ENCODE measurements at regions of chr3 and their contacts with region 1.

Region 1: DNA sequence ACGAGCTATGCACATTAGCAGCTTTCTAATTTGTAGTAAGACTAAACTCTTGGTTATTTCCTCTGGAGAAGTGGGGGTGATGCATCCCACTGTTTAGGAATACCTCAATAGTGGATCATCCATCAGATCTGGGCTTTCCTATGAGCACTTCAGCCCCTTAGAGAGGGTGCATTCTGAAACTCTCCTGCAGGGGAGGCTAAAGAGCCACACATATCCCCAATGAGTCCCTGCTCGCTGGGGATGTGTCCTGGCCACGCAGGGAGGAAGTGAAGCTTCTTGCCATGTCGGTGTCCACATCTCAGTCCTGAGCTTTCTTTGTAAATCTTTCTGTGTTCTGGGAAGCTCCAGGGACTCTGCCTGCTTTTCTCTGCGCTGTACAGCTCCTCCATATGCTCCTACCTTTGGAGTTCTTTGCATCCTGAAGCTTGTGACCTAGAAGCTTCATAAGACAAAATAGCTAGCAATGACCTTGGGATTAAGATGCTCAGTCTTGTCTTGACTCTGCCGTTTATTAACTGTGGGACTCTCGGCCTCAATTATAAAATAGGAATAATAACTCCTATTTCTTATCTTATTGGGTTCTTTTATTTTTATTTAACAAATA is 28.3 kb upstream of the MASP1 start:
- DNase-seq: peak; percentile 34
- H3K4me3 ChIP-seq: no peak overlapping the region
- H3K27ac ChIP-seq: no peak overlapping the region
- H3K27me3 ChIP-seq: peaks cover 15% of the 10 kb centered on the region
- CTCF ChIP-seq: peak; percentile 93

Region 2: GRCh38 chr3:187112934-187113793 is 206.6 kb before region 1 on chr3:
- CTCF ChIA-PET with region 1: interaction called, 20 read pairs
- POLR2A ChIA-PET with region 1: no interaction called
- DNase-seq: no peak
- H3K4me3 ChIP-seq: no peak overlapping the region
- H3K27ac ChIP-seq: no peak overlapping the region
- H3K27me3 ChIP-seq: no peaks in the 10 kb centered on the region
- CTCF ChIP-seq: peak; percentile 61

Region 3: DNA sequence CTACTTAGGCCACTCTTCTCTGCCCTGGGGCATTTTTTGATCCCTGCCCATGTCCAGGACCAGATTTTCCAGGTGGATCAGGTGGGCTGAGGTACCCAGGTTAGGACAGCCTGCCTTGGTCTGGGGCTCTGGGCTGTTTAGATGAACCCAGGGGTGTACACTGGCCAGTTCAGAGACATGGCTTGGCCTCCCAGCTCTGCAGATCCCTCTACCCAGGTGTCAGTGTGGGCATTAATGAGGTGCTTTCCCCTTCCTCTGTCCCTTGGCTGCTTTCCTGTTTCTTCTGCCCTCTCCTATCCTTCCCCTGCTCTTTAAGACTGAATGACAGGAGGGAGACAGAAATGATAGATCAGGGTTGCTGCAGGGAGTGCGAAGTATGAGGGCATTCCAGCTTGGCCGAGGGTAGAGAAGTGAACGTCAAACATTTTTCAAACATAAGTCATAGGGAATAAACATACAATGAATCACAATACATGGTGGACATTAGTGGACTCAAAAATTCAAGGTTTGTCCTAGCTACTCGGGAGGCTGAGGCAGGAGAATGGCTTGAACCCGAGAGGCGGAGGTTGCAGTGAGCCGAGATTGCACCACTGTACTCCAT is 92.0 kb before region 1 on chr3:
- CTCF ChIA-PET with region 1: interaction called, 241 read pairs
- POLR2A ChIA-PET with region 1: interaction called, 3 read pairs
- DNase-seq: peak; percentile 43
- H3K4me3 ChIP-seq: no peak overlapping the region
- H3K27ac ChIP-seq: no peak overlapping the region
- H3K27me3 ChIP-seq: no peaks in the 10 kb centered on the region
- CTCF ChIP-seq: no peak

Region 4: GRCh38 chr3:187291001-187291511 is 28.7 kb before region 1 on chr3:
- CTCF ChIA-PET with region 1: interaction called, 54 read pairs
- POLR2A ChIA-PET with region 1: no interaction called
- DNase-seq: peak; percentile 24
- H3K4me3 ChIP-seq: peak overlapping the region; percentile 73
- H3K27ac ChIP-seq: peak overlapping the region; percentile 47
- H3K27me3 ChIP-seq: no peaks in the 10 kb centered on the region
- CTCF ChIP-seq: no peak

Region 5: GRCh38 chr3:187360596-187360995 is 40.8 kb after region 1 on chr3:
- CTCF ChIA-PET with region 1: interaction called, 11 read pairs
- POLR2A ChIA-PET with region 1: no interaction called
- DNase-seq: no peak
- H3K4me3 ChIP-seq: no peak overlapping the region
- H3K27ac ChIP-seq: no peak overlapping the region
- H3K27me3 ChIP-seq: peaks cover 17% of the 10 kb centered on the region
- CTCF ChIP-seq: no peak

Region 6: GRCh38 chr3:187616307-187616972 is 296.6 kb after region 1 on chr3:
- CTCF ChIA-PET with region 1: interaction called, 79 read pairs
- POLR2A ChIA-PET with region 1: no interaction called
- DNase-seq: peak; percentile 20
- H3K4me3 ChIP-seq: no peak overlapping the region
- H3K27ac ChIP-seq: no peak overlapping the region
- H3K27me3 ChIP-seq: peaks cover 13% of the 10 kb centered on the region
- CTCF ChIP-seq: peak; percentile 73

Region 7: GRCh38 chr3:187694801-187695200 is 375.0 kb after region 1 on chr3:
- CTCF ChIA-PET with region 1: interaction called, 10 read pairs
- POLR2A ChIA-PET with region 1: no interaction called
- DNase-seq: no peak
- H3K4me3 ChIP-seq: no peak overlapping the region
- H3K27ac ChIP-seq: no peak overlapping the region
- H3K27me3 ChIP-seq: peaks cover 22% of the 10 kb centered on the region
- CTCF ChIP-seq: no peak